ENCODE measurements at regions of chr9 and their contacts with region 1.

Region 1: DNA sequence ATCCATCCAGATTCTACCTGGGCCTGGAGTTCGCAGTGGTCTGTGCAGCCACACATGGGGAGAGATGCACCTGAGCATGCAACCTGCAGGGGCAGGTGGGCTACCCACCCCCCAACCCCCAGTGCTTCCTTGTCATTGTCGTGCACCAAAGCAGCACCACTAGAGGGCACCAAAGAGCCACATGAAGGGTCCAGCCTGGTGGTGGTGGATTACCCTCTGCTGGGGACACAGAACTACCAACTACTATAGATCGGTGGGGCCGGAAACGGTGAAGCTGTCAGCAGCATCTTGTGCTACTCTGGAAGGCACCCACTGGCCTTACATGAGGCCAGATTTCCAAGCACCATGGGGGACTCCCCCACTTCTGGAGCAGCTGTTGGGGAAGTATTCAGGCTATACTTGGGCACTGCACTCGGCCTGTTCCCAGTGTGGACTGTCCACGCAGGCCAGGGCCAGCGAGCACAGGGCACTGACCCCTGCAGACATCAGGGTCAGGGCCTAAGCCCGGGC is 60.2 kb upstream of the TBC1D2 start:
- DNase-seq: peak; percentile 58 to 92
- H3K4me3 ChIP-seq: no peak overlapping the region
- H3K4me1 ChIP-seq: no peaks in the 10 kb centered on the region
- H3K27me3 ChIP-seq: no peaks in the 10 kb centered on the region

Region 2: GRCh38 chr9:97425973-97426336 is 889.7 kb before region 1 on chr9:
- in situ Hi-C with region 1: no loop called
- DNase-seq: no peak
- H3K4me3 ChIP-seq: no peak overlapping the region
- H3K4me1 ChIP-seq: no peaks in the 10 kb centered on the region
- H3K27me3 ChIP-seq: no peaks in the 10 kb centered on the region

Region 3: DNA sequence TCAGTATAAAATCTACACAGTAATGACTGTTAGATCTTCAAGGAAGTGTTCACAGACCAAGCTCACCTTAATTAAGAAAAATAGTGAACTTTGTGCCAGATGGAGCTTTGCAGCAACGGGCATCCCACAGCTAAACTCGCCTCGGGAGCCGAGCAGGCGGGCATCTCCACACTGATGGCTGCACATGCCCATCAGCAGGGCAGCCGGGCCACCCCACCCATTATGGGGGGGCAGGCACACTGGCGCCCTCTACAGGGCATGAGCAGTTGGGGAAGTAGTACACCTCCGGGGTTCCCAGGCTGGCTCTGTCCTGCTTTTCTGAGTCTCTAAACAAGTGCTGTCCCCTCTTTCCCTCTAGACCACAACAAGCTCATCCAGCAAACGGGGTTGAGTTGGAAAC is 459.1 kb after region 1 on chr9:
- in situ Hi-C with region 1: loop called (anchors 5 kb)
- DNase-seq: peak in 1 of 2 experiments; percentile 28
- H3K4me3 ChIP-seq: no peak overlapping the region
- H3K4me1 ChIP-seq: no peaks in the 10 kb centered on the region
- H3K27me3 ChIP-seq: no peaks in the 10 kb centered on the region